Natural killer cell (primary cell): ENCODE measurements at regions of chr1 and their contacts with region 1.

Region 1: GRCh38 chr1:153532769-153533599 is 2.8 kb downstream of the S100A6 start:
- DNase-seq: peak; percentile 73 to 88
- ATAC-seq: no peak
- H3K4me3 ChIP-seq: peak overlapping the region; percentile 1
- H3K4me3 Mint-ChIP-seq: peak overlapping the region; percentile 84
- H3K27ac ChIP-seq: peak overlapping the region; percentile 71
- H3K27ac Mint-ChIP-seq: peak overlapping the region; percentile 90 to 94
- H3K4me1 ChIP-seq: peaks cover 59% of the 10 kb centered on the region
- H3K4me1 Mint-ChIP-seq: peaks cover 50 to 57% of the 10 kb centered on the region in 2 donors
- H3K27me3 ChIP-seq: no peaks in the 10 kb centered on the region
- H3K27me3 Mint-ChIP-seq: no peaks in the 10 kb centered on the region
- CTCF ChIP-seq: peak; percentile 78

Region 2: GRCh38 chr1:153447498-153448170 is 85.3 kb before region 1 on chr1:
- intact Hi-C with region 1: no loop called
- DNase-seq: no peak
- ATAC-seq: no peak
- H3K4me3 ChIP-seq: no peak overlapping the region
- H3K4me3 Mint-ChIP-seq: no peak overlapping the region
- H3K27ac ChIP-seq: no peak overlapping the region
- H3K27ac Mint-ChIP-seq: no peak overlapping the region
- H3K4me1 ChIP-seq: no peaks in the 10 kb centered on the region
- H3K4me1 Mint-ChIP-seq: no peaks in the 10 kb centered on the region
- H3K27me3 ChIP-seq: peaks cover 5% of the 10 kb centered on the region
- H3K27me3 Mint-ChIP-seq: peaks cover 9 to 44% of the 10 kb centered on the region in 2 donors
- CTCF ChIP-seq: no peak

Region 3: GRCh38 chr1:153545067-153546055 is 12.4 kb after region 1 on chr1 and contains the start of gene S100A4:
- intact Hi-C with region 1: loop called (anchors 1 kb)
- DNase-seq: peak; percentile 50 to 88
- ATAC-seq: peak; percentile 81 to 88 (median 88)
- H3K4me3 ChIP-seq: peak within 1 kb of the TSS; percentile 67
- H3K4me3 Mint-ChIP-seq: peak within 1 kb of the TSS; percentile 98
- H3K27ac ChIP-seq: peak within 1 kb of the TSS; percentile 65
- H3K27ac Mint-ChIP-seq: peak within 1 kb of the TSS; percentile 94 to 98
- H3K4me1 ChIP-seq: peaks cover 75% of the 10 kb centered on the region
- H3K4me1 Mint-ChIP-seq: peaks cover 57 to 84% of the 10 kb centered on the region in 2 donors
- H3K27me3 ChIP-seq: no peaks in the 10 kb centered on the region
- H3K27me3 Mint-ChIP-seq: no peaks in the 10 kb centered on the region
- CTCF ChIP-seq: no peak
- total RNA-seq, gene S100A4: 509 to 689 (median 597) TPM

Region 4: GRCh38 chr1:153568367-153569099 is 35.5 kb after region 1 on chr1:
- intact Hi-C with region 1: loop called (anchors 1 kb)
- DNase-seq: peak; percentile 73 to 89
- ATAC-seq: peak; percentile 41 to 71 (median 71)
- H3K4me3 ChIP-seq: no peak overlapping the region
- H3K4me3 Mint-ChIP-seq: peak overlapping the region; percentile 60
- H3K27ac ChIP-seq: no peak overlapping the region
- H3K27ac Mint-ChIP-seq: peak overlapping the region; percentile 50 to 98
- H3K4me1 ChIP-seq: peaks cover 37% of the 10 kb centered on the region
- H3K4me1 Mint-ChIP-seq: peaks cover 25 to 34% of the 10 kb centered on the region in 2 donors
- H3K27me3 ChIP-seq: no peaks in the 10 kb centered on the region
- H3K27me3 Mint-ChIP-seq: peaks cover 0 to 12% of the 10 kb centered on the region in 2 donors
- CTCF ChIP-seq: peak; percentile 97

Region 5: GRCh38 chr1:153633716-153634665 is 101.0 kb after region 1 on chr1 and contains the start of gene CHTOP:
- intact Hi-C with region 1: loop called (anchors 2 kb)
- DNase-seq: peak; percentile 98 to 99
- ATAC-seq: peak; percentile 86 to 97 (median 88)
- H3K4me3 ChIP-seq: peak within 1 kb of the TSS; percentile 72
- H3K4me3 Mint-ChIP-seq: peak within 1 kb of the TSS; percentile 99
- H3K27ac ChIP-seq: peak within 1 kb of the TSS; percentile 91
- H3K27ac Mint-ChIP-seq: peak within 1 kb of the TSS; percentile 98 to 99
- H3K4me1 ChIP-seq: peaks cover 24% of the 10 kb centered on the region
- H3K4me1 Mint-ChIP-seq: peaks cover 24 to 34% of the 10 kb centered on the region in 2 donors
- H3K27me3 ChIP-seq: no peaks in the 10 kb centered on the region
- H3K27me3 Mint-ChIP-seq: no peaks in the 10 kb centered on the region
- CTCF ChIP-seq: no peak
- total RNA-seq, gene CHTOP: 94.7 to 110 (median 106) TPM